ENCODE measurements at regions of chr3 and their contacts with region 1.

Region 1: GRCh38 chr3:123328851-123329635 is 119.8 kb downstream of the ADCY5 start:
- DNase-seq: no peak
- H3K4me3 ChIP-seq: no peak overlapping the region
- H3K27me3 ChIP-seq: peaks cover 7% of the 10 kb centered on the region
- CTCF ChIP-seq: peak; percentile 92

Region 2: DNA sequence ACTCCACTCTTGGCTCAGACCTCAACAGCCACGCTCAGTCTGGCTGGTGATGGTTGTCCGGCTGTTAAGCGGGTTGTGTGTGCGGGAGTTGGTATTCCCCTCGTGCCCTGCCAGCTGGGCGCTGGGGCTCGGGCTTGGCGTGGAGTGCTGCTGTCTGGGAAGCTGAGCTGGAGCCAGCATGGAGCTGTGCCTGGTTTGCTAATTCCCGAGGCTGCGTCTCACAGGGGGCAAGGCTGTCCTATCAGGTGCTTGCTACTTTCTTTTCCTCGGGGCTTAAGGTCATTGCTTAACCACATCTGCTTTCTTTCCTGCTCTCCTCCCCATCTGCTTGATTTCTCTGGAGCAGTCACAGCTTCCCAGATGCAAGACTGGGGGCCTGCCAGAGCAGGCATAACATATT is 232.3 kb before region 1 on chr3:
- CTCF ChIA-PET with region 1: no interaction called
- POLR2A ChIA-PET with region 1: no interaction called
- DNase-seq: peak; percentile 22
- H3K4me3 ChIP-seq: no peak overlapping the region
- H3K27me3 ChIP-seq: no peaks in the 10 kb centered on the region
- CTCF ChIP-seq: no peak

Region 3: GRCh38 chr3:123341871-123342642 is 13.0 kb after region 1 on chr3:
- CTCF ChIA-PET with region 1: interaction called, 12 read pairs
- POLR2A ChIA-PET with region 1: no interaction called
- DNase-seq: no peak
- H3K4me3 ChIP-seq: no peak overlapping the region
- H3K27me3 ChIP-seq: peaks cover 13% of the 10 kb centered on the region
- CTCF ChIP-seq: no peak

Region 4: DNA sequence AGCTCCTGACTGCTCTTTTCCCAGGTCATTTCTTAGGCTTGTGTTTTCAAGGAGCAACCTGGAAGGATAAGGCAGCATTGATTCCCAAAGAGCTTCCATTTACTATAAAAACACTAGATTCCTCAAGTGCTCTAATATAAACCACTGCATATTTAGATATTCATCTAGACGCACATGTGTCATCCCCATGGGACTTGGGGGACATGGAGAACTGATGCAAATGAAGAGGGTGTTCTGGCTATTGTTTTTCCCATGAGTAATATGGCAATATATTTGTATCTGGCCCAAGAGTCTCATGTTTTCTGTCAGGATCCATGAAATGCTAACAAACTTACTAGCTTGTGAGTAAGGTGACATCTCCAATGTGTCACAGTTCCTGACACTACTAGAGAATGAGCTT is 224.5 kb after region 1 on chr3:
- CTCF ChIA-PET with region 1: interaction called, 76 read pairs
- POLR2A ChIA-PET with region 1: no interaction called
- DNase-seq: no peak
- H3K4me3 ChIP-seq: no peak overlapping the region
- H3K27me3 ChIP-seq: no peaks in the 10 kb centered on the region
- CTCF ChIP-seq: no peak